Activated CD4-positive, alpha-beta T cell treated with anti-CD3 and anti-CD28 coated beads, Interleukin-2, amount 10 ng/mL, durations not matched to agents 7 days and 5 days (primary cell): ENCODE measurements at regions of chr1 and their contacts with region 1.

Region 1: GRCh38 chr1:226687426-226687825 is 51.7 kb downstream of the ITPKB start:
- DNase-seq: peak; percentile 30
- H3K4me3 Mint-ChIP-seq: no peak overlapping the region
- H3K27ac Mint-ChIP-seq: no peak overlapping the region
- H3K4me1 Mint-ChIP-seq: peaks cover 97% of the 10 kb centered on the region
- H3K27me3 Mint-ChIP-seq: no peaks in the 10 kb centered on the region

Region 2: GRCh38 chr1:226372885-226373284 is 314.5 kb before region 1 on chr1:
- CTCF ChIA-PET with region 1: no interaction called
- POLR2A ChIA-PET with region 1: no interaction called
- DNase-seq: no peak
- H3K4me3 Mint-ChIP-seq: no peak overlapping the region
- H3K27ac Mint-ChIP-seq: no peak overlapping the region
- H3K4me1 Mint-ChIP-seq: no peaks in the 10 kb centered on the region
- H3K27me3 Mint-ChIP-seq: no peaks in the 10 kb centered on the region

Region 3: GRCh38 chr1:226428791-226429461 is 258.5 kb before region 1 on chr1:
- CTCF ChIA-PET with region 1: no interaction called
- POLR2A ChIA-PET with region 1: no interaction called
- DNase-seq: no peak
- H3K4me3 Mint-ChIP-seq: no peak overlapping the region
- H3K27ac Mint-ChIP-seq: no peak overlapping the region
- H3K4me1 Mint-ChIP-seq: peaks cover 26% of the 10 kb centered on the region
- H3K27me3 Mint-ChIP-seq: peaks cover 2% of the 10 kb centered on the region

Region 4: DNA sequence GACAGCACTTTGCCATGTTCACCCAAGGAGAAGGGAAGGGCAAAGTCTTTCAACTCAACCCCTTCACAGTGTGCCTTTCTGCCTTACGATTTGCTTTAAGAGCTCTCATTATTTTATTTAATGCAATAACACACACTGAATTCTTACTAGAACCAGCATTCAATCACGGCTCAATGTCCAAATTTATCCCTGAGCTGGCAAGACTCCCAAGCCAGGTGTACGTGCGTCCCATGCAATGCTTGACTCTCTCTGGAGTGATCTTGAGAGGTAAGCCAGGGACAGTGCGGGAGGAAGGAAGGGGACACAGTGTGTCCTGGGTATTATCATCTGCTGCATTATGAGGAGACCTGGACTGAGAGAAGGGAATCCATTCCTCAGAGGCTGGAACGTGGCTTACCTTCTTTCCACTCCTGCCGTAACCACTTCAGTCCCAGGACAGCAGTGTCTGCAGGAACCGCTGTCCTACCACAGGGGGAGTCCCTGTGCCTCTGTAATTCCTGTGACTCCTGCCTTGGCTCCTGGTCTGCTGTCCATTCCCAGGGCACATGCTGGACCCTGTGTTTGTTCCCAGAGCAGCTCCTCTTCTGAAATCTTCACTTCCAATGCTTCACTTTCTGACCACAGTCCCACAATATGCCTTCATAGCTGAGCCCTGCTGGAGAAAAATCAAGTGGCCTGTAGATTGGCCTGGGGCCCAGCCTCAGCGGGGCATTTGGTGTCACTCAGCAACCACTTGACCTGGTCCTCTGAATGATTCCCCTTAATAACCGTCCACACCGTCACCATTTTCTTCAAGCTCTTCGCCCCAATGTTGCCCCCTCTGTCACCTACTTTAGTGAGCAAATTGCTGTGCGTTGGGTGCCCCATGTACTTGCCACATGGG is 167.5 kb before region 1 on chr1:
- CTCF ChIA-PET with region 1: no interaction called
- POLR2A ChIA-PET with region 1: no interaction called
- DNase-seq: no peak
- H3K4me3 Mint-ChIP-seq: no peak overlapping the region
- H3K27ac Mint-ChIP-seq: no peak overlapping the region
- H3K4me1 Mint-ChIP-seq: no peaks in the 10 kb centered on the region
- H3K27me3 Mint-ChIP-seq: peaks cover 4% of the 10 kb centered on the region

Region 5: GRCh38 chr1:226706684-226707083 is 19.3 kb after region 1 on chr1:
- CTCF ChIA-PET with region 1: interaction called, 15 read pairs
- POLR2A ChIA-PET with region 1: no interaction called
- DNase-seq: no peak
- H3K4me3 Mint-ChIP-seq: no peak overlapping the region
- H3K27ac Mint-ChIP-seq: no peak overlapping the region
- H3K4me1 Mint-ChIP-seq: peaks cover 79% of the 10 kb centered on the region
- H3K27me3 Mint-ChIP-seq: peaks cover 2% of the 10 kb centered on the region

Region 6: DNA sequence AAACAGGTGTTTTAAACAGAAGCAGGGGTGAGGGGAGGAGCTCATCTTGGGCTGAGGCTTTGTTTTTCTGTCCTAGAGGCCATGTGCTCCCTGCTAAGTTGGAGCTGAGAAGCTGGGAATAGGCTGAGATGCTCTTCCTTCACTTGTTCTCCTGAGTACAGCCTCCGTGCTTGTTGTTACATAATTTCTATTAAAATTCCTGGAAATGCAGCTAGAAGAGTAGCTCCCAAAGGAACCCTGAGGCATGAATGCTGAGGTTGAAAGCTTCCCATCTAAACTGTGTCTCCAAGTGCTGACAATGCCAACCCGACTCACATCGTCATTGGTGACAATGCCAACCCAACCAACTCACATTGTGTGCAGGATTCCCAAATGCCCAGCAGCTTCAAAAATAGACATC is 64.3 kb after region 1 on chr1:
- CTCF ChIA-PET with region 1: no interaction called
- POLR2A ChIA-PET with region 1: no interaction called
- DNase-seq: no peak
- H3K4me3 Mint-ChIP-seq: no peak overlapping the region
- H3K27ac Mint-ChIP-seq: no peak overlapping the region
- H3K4me1 Mint-ChIP-seq: peaks cover 34% of the 10 kb centered on the region
- H3K27me3 Mint-ChIP-seq: peaks cover 2% of the 10 kb centered on the region